Dendritic cell treated with granulocyte-macrophage colony-stimulating factor and Interleukin-4, amounts not matched to agents 40 ng/mL and 50 ng/mL, for 4 days (primary cell): ENCODE measurements at regions of chr7 and their contacts with region 1.

Region 1: DNA sequence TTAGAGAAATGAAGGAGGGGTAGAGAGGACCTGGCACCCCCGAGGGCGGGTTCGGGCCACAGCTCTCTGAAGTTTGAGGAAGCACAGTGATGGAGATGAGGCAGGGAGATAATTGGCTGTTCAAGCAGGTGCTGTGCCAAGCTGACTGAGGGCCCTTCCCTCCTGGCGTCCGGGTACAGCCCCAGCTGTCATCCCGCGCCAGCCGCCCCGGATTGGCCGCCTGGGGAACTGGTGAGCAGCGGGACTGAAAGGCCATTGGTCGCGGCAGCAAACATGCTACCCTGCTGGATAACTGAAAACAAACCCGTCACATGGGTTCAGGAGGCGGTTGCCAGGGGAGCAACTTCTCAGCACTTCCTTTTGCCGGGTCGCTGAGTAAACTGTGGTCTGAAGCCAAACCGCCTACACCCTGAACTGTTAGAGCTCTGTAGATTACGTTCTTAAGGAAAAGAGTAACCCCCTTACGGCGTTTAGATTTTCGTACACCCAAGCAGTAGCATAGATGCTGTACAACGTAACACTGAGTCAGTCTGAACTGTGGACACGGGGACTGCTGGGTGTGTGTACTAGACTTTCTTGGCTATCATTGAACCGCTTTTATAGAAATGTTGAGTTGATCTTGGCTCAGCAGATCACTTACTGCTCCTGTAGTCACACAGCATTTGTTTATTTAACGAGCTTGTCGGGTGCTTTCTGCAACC is 1.3 kb downstream of the INSIG1 start:
- H3K4me3 Mint-ChIP-seq: peak overlapping the region; percentile 96
- H3K27ac Mint-ChIP-seq: peak overlapping the region; percentile 92
- H3K4me1 Mint-ChIP-seq: peaks cover 53% of the 10 kb centered on the region
- H3K27me3 Mint-ChIP-seq: no peaks in the 10 kb centered on the region

Region 2: GRCh38 chr7:155003376-155004214 is 295.4 kb before region 1 on chr7:
- intact Hi-C with region 1: loop called (anchors 5 kb)
- H3K4me3 Mint-ChIP-seq: peak overlapping the region; percentile 81
- H3K27ac Mint-ChIP-seq: peak overlapping the region; percentile 68
- H3K4me1 Mint-ChIP-seq: peaks cover 9% of the 10 kb centered on the region
- H3K27me3 Mint-ChIP-seq: no peaks in the 10 kb centered on the region

Region 3: GRCh38 chr7:155205368-155206317 is 93.3 kb before region 1 on chr7:
- intact Hi-C with region 1: loop called (anchors 1 kb)
- H3K4me3 Mint-ChIP-seq: peak overlapping the region; percentile 79
- H3K27ac Mint-ChIP-seq: peak overlapping the region; percentile 97
- H3K4me1 Mint-ChIP-seq: peaks cover 88% of the 10 kb centered on the region
- H3K27me3 Mint-ChIP-seq: no peaks in the 10 kb centered on the region

Region 4: DNA sequence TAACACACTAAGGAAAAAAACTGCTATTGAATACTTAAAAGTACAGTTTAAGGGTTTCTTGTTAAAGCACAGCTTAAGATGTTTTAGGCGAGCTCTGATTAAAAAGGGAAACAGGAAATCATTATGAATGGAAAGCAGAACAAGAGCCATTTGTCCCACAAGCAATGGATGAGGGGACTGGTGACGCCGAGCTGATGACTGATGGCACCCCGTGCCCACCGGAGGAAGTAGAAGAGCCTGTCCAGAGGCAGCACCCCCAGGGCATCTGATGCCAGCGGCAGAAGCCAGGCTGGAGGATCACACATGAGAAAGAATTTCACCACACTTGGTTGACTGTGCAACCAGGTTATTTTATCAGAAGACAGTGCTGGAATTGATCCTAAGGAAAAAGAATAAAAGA is 16.3 kb before region 1 on chr7:
- intact Hi-C with region 1: loop called (anchors 1 kb)
- H3K4me3 Mint-ChIP-seq: peak overlapping the region; percentile 39
- H3K27ac Mint-ChIP-seq: peak overlapping the region; percentile 90
- H3K4me1 Mint-ChIP-seq: peaks cover 87% of the 10 kb centered on the region
- H3K27me3 Mint-ChIP-seq: peaks cover 11% of the 10 kb centered on the region

Region 5: DNA sequence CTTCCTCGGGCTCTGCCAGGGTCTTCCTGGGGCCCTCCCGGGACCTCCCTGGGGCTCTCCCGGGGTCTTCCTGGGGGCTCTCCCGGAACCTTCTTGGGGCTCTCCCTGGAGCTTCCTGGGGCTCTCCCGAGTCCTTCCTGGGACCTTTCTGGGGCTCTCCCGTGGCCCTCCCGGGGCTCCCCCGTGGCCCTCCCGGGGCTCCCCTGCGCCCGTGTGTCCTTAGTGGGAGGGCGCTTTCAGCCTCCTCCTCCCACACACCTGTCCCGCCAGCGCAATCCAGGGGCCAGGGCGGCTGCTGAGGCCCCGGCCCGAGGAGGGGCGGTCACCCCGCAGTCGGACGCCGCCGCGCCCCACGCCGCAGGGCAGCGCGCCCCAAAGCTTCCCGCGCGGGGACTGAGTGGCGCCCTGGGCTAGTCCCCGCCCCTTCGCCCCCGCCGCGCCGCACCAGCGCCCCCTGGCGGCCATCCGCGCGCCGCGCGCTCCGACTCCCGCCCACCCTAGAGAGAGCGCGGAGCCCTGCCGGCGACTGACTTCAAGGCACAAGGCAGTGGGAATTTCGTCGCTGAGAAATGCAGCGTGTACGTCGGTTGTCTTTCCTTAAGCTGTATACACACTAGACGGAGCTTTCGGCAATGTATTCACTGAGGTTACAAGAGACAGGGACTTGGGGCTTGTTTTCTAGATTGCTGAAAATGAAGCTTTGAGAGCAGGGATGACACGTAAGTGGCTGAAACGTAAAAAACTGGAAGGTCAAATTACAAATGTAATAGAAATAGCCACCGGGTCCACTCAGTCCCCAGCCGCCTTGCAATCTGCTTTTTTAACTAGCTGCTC is 45.8 kb after region 1 on chr7:
- intact Hi-C with region 1: loop called (anchors 5 kb)
- H3K4me3 Mint-ChIP-seq: peak overlapping the region; percentile 25
- H3K27ac Mint-ChIP-seq: no peak overlapping the region
- H3K4me1 Mint-ChIP-seq: no peaks in the 10 kb centered on the region
- H3K27me3 Mint-ChIP-seq: peaks cover 29% of the 10 kb centered on the region

Region 6: GRCh38 chr7:155543011-155543876 is 244.3 kb after region 1 on chr7:
- intact Hi-C with region 1: no loop called
- H3K4me3 Mint-ChIP-seq: no peak overlapping the region
- H3K27ac Mint-ChIP-seq: no peak overlapping the region
- H3K4me1 Mint-ChIP-seq: no peaks in the 10 kb centered on the region
- H3K27me3 Mint-ChIP-seq: peaks cover 38% of the 10 kb centered on the region

Region 7: DNA sequence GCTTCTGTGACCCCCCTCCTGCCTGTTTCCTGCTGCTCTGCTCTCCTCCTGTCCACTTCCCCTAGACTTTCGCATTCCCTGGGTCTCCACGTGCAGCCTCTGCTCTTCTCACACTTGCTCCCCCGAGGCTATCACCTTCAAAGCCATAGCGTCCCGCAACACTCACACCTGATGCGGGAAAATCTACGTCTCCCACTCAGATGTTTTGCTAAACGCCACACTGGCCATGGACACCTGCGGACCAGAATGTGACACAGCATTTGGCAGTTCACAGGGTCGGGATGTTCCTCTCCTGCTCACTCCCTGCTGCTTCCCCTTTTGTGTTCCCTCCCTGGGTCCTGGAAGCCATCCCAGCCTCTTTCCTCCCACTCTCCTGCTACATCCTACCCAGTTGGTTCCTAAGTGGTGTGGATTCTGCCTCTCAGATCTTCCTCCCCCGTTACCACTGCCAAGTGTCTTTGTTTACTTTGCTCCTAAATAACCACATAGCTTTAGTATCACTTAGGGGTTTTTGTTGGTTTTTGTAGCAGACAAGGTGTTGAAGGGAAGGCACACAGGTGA is 311.7 kb after region 1 on chr7:
- intact Hi-C with region 1: no loop called
- H3K4me3 Mint-ChIP-seq: peak overlapping the region; percentile 33
- H3K27ac Mint-ChIP-seq: peak overlapping the region; percentile 8
- H3K4me1 Mint-ChIP-seq: peaks cover 21% of the 10 kb centered on the region
- H3K27me3 Mint-ChIP-seq: peaks cover 11% of the 10 kb centered on the region